ENCODE measurements at regions of chr19 and their contacts with region 1.

Region 1: GRCh38 chr19:29610563-29611271 is 4.6 kb downstream of the POP4 start:
- DNase-seq: peak; percentile 75 to 88
- ATAC-seq: peak; percentile 80 to 85
- H3K4me3 ChIP-seq: no peak overlapping the region
- H3K27ac ChIP-seq: peak overlapping the region; percentile 51 to 81 (median 53)
- H3K4me1 ChIP-seq: peaks cover 17 to 19% of the 10 kb centered on the region in 2 donors
- H3K27me3 ChIP-seq: no peaks in the 10 kb centered on the region
- CTCF ChIP-seq: peak; percentile 79 to 90 (median 84)
- POLR2A ChIP-seq: no peak

Region 2: GRCh38 chr19:29212648-29213573 is 397.8 kb before region 1 on chr19 and contains the start of gene UQCRFS1:
- in situ Hi-C with region 1: loop called in 2 of 4 experiments (anchors 25 kb)
- intact Hi-C with region 1: no loop called
- DNase-seq: peak; percentile 90 to 94
- ATAC-seq: peak; percentile 93 to 97
- H3K4me3 ChIP-seq: peak within 1 kb of the TSS; percentile 70 to 84 (median 70)
- H3K27ac ChIP-seq: peak within 1 kb of the TSS; percentile 88 to 94 (median 92)
- H3K4me1 ChIP-seq: peaks cover 29 to 31% of the 10 kb centered on the region in 2 donors
- H3K27me3 ChIP-seq: no peaks in the 10 kb centered on the region
- CTCF ChIP-seq: no peak
- POLR2A ChIP-seq: peak; percentile 96 to 97
- total RNA-seq, gene UQCRFS1: 78.1 to 142 (median 106) TPM

Region 3: GRCh38 chr19:29694669-29695627 is 84.2 kb after region 1 on chr19:
- in situ Hi-C with region 1: no loop called
- intact Hi-C with region 1: loop called (anchors 1 kb)
- DNase-seq: peak; percentile 83 to 94
- ATAC-seq: peak; percentile 79 to 82
- H3K4me3 ChIP-seq: no peak overlapping the region
- H3K27ac ChIP-seq: peak overlapping the region; percentile 48 to 78 (median 68)
- H3K4me1 ChIP-seq: peaks cover 13 to 26% of the 10 kb centered on the region in 2 donors
- H3K27me3 ChIP-seq: no peaks in the 10 kb centered on the region
- CTCF ChIP-seq: peak; percentile 92 to 96 (median 92)
- POLR2A ChIP-seq: no peak

Region 4: DNA sequence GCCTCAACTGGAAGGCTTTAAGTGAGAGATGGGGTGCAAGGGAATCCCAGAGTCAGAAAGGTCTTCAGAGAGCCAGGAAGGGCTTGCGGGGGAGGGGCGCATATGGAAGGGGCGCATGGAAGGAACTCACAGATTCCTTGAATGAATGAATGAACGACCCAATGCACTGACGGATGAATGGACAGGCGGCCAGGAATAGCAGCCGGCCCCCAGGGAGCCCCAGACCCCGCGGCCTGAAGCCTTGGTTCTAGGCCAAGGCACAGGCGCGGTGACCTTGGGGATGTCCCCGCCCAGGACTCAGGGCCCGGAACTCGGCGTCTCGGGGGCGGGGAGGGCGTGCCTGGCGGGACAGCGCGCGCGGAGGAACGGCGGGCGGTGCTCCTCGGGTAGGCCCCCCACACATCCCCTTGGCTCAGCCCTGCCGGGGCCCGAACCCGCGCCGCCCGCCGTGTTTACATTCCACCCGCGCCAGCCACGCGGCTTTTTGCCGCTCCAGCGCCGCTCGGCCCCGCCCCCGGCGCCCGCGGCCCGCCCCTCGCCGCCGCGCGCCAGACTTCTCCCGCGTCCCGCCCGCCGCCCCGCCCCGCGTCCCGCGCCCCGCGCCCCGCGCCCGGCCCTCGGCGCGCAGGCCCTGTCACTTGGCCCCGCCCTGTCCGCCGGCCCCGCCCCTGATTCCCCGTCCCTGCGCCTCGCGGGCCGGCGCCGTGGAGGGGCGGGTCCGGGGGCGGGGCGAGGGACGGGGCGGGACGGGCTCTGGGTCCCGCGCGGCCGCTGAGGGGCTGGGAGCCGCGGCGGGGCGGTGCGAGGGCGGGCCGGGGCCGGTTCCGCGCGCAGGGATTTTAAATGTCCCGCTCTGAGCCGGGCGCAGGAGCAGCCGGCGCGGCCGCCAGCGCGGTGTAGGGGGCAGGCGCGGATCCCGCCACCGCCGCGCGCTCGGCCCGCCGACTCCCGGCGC is 200.7 kb after region 1 on chr19 and contains the start of gene CCNE1:
- in situ Hi-C with region 1: no loop called
- intact Hi-C with region 1: loop called (anchors 10 kb)
- DNase-seq: peak; percentile 81 to 86
- ATAC-seq: peak; percentile 93 to 94
- H3K4me3 ChIP-seq: peak within 1 kb of the TSS; percentile 58 to 67 (median 61)
- H3K27ac ChIP-seq: peak within 1 kb of the TSS; percentile 46 to 72 (median 60)
- H3K4me1 ChIP-seq: no peaks in the 10 kb centered on the region
- H3K27me3 ChIP-seq: no peaks in the 10 kb centered on the region
- CTCF ChIP-seq: no peak
- POLR2A ChIP-seq: peak; percentile 27 to 49
- total RNA-seq, gene CCNE1: 2.9 to 7.3 (median 4.5) TPM

Region 5: GRCh38 chr19:29941828-29942403 is 331.2 kb after region 1 on chr19 and contains the start of gene URI1:
- in situ Hi-C with region 1: no loop called
- intact Hi-C with region 1: loop called (anchors 2 kb)
- DNase-seq: peak; percentile 80 to 87
- ATAC-seq: peak; percentile 93 to 94
- H3K4me3 ChIP-seq: peak within 1 kb of the TSS; percentile 65 to 88 (median 78)
- H3K27ac ChIP-seq: peak within 1 kb of the TSS; percentile 70 to 87 (median 80)
- H3K4me1 ChIP-seq: peaks cover 24 to 25% of the 10 kb centered on the region in 2 donors
- H3K27me3 ChIP-seq: no peaks in the 10 kb centered on the region
- CTCF ChIP-seq: no peak
- POLR2A ChIP-seq: peak; percentile 74 to 84
- total RNA-seq, gene URI1: 37.4 to 84.1 (median 59.2) TPM